ENCODE measurements at regions of chr19 and their contacts with region 1.

Region 1: DNA sequence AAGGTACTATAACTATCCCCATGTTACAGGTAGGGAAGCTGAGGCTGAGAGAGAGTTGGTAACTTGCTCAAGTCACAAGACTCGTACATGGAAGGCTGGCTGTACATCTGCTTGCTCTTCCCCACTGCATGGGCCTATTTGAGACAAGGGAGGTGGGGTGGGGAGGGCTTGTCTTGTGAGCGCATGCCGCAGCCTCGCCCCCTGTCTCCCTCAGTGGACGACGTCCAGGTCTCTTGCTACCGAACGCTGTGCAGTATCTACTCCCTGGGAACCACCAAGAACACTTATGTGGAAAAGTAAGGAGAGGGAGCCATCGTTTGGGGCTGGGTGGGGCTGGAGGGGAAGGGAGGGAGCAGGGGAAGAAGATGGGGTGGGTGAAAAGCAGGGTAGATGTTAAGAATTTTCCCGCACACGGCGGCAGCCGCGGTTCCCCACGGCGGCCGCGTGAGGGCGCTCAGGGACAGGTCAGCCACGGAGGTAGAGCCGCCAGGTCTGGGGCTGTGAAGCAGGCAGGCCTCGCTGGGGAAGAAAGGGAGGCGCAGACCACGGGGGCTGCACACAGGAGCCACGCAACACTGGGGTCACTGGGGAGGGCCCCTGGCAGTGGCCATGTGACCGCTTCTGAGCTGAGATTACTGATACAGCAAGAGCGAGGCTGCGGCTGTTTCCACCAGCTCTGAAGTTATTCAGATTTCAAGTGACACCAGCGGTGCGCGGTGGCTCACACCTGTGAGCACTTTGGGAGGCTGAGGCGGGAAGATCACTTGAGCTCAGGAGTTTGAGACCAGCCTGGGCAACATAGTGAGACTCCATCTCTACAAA is 81.5 kb downstream of the RYR1 start:
- DNase-seq: peak; percentile 45
- H3K4me3 ChIP-seq: peak overlapping the region in 1 of 3 experiments; percentile 4
- H3K27ac ChIP-seq: no peak overlapping the region
- H3K4me1 ChIP-seq: no peaks in the 10 kb centered on the region
- H3K27me3 ChIP-seq: no peaks in the 10 kb centered on the region
- CTCF ChIP-seq: peak; percentile 62 to 90

Region 2: GRCh38 chr19:38229585-38230073 is 285.4 kb before region 1 on chr19:
- CTCF ChIA-PET with region 1: no interaction called
- dilution Hi-C with region 1: no loop called
- in situ Hi-C with region 1: loop called in 1 of 2 experiments (anchors 25 kb)
- intact Hi-C with region 1: loop called (anchors 10 kb)
- DNase-seq: peak; percentile 79
- H3K4me3 ChIP-seq: no peak overlapping the region
- H3K27ac ChIP-seq: no peak overlapping the region
- H3K4me1 ChIP-seq: peaks cover 14% of the 10 kb centered on the region
- H3K27me3 ChIP-seq: peaks cover 12% of the 10 kb centered on the region
- CTCF ChIP-seq: no peak

Region 3: GRCh38 chr19:38891771-38892170 is 376.7 kb after region 1 on chr19:
- CTCF ChIA-PET with region 1: no interaction called
- dilution Hi-C with region 1: no loop called
- in situ Hi-C with region 1: no loop called
- intact Hi-C with region 1: loop called (anchors 2 kb)
- DNase-seq: no peak
- H3K4me3 ChIP-seq: no peak overlapping the region
- H3K27ac ChIP-seq: no peak overlapping the region
- H3K4me1 ChIP-seq: no peaks in the 10 kb centered on the region
- H3K27me3 ChIP-seq: no peaks in the 10 kb centered on the region
- CTCF ChIP-seq: no peak